Cardiac septum (tissue), 1 donor: ENCODE measurements at regions of chr18 and their contacts with region 1.

Region 1: DNA sequence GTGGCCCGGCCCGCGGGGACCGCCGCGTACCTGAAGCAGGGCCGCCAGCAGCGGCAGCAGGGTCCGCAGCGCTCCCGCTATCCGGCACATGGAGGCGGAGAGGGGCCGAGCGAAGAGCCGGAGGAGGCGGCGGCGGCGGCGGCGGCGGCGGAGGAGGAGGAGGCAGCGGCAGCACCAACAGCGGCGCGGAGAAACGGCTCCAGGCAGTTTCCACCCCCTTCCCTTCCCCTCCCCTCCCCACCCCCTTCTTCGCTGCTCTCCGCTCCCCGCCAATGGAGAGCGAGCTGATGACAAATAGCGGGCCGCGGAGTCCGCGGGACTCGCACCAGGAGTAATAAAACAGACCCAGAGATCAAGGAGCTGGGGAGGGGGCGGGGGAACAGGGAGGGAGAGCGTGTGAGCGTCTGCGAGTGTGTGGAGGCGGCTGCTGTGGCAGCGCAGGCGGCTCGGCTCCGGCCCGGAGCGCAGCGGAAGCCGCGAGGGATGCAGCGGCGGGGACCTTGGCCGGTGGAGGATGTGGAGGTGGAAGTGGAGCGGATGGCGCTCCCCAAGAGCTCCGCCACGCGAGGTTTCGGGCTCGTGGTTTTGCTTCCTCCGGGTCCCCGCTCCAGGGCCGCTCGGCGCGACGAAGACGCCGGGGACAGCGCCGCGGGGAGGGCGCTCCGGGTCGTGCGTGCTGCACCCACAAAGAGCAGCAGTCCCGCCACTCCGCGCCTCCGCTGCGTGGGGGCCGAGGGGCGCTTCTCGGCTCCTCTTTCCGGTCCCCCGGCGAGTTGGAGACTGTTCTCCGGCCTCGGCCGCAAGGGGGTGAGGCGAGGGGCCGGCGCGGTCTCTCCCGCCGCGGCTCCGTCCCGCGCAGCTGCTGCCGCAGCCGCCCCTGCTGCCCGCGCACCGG is at the start of gene CDH2:
- DNase-seq: peak; percentile 82
- total RNA-seq, gene CDH2: 367 TPM

Region 2: GRCh38 chr18:27860701-27861107 is 316.5 kb before region 1 on chr18:
- intact Hi-C with region 1: loop called (anchors 10 kb)
- DNase-seq: no peak

Region 3: GRCh38 chr18:28003451-28003850 is 173.7 kb before region 1 on chr18:
- intact Hi-C with region 1: loop called (anchors 10 kb)
- DNase-seq: no peak

Region 4: GRCh38 chr18:28127763-28128663 is 49.2 kb before region 1 on chr18:
- intact Hi-C with region 1: loop called (anchors 5 kb)
- DNase-seq: no peak

Region 5: GRCh38 chr18:28313602-28314001 is 136.4 kb after region 1 on chr18:
- intact Hi-C with region 1: no loop called
- DNase-seq: no peak